MCF 10A (cell line): ENCODE measurements at regions of chr4 and their contacts with region 1.

Region 1: DNA sequence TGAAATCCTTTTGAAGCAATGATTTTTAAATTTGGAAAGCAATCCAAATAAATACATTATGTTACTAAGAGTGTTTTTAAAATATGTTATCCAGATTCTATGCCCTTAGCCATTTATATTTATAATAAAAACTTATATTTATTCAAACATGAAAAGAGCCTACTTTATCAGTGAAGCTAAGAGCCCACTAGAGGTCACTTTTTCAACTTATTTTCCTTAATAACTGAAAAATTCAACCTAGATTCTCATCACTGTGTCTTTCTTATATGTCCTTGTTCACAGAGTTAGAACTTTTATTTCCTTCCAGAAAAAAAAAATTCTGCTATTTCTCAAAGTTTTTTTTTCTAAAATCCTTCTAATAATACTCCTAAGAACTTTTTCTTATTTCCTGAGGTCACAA is 23.9 kb downstream of the PRDM8 start:
- DNase-seq: peak; percentile 34
- H3K4me3 Mint-ChIP-seq: no peak overlapping the region
- H3K27ac Mint-ChIP-seq: no peak overlapping the region
- H3K4me1 Mint-ChIP-seq: no peaks in the 10 kb centered on the region
- H3K27me3 Mint-ChIP-seq: no peaks in the 10 kb centered on the region
- CTCF ChIP-seq: peak; percentile 23

Region 2: DNA sequence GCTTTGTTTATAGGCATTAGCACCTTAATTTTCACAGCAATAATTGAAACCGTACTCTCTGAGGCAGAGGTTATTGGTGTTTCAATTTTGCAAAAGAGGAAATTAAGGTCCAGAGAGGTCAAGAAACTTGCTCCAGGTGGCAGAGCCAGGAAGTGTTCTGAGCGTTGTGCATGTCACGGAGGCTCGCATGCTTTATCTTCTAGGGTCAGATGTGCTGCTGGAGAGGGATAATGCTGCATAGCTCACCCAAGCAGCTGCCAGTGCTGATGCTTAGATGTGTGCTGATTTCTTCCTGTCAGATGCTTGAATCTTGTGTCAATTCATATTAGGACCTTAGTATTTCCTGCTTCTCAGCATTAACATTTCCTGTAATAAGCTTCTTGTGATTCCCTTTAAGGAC is 32.3 kb after region 1 on chr4:
- CTCF ChIA-PET with region 1: no interaction called
- POLR2A ChIA-PET with region 1: no interaction called
- intact Hi-C with region 1: no loop called
- DNase-seq: no peak
- H3K4me3 Mint-ChIP-seq: no peak overlapping the region
- H3K27ac Mint-ChIP-seq: no peak overlapping the region
- H3K4me1 Mint-ChIP-seq: no peaks in the 10 kb centered on the region
- H3K27me3 Mint-ChIP-seq: no peaks in the 10 kb centered on the region
- CTCF ChIP-seq: no peak

Region 3: DNA sequence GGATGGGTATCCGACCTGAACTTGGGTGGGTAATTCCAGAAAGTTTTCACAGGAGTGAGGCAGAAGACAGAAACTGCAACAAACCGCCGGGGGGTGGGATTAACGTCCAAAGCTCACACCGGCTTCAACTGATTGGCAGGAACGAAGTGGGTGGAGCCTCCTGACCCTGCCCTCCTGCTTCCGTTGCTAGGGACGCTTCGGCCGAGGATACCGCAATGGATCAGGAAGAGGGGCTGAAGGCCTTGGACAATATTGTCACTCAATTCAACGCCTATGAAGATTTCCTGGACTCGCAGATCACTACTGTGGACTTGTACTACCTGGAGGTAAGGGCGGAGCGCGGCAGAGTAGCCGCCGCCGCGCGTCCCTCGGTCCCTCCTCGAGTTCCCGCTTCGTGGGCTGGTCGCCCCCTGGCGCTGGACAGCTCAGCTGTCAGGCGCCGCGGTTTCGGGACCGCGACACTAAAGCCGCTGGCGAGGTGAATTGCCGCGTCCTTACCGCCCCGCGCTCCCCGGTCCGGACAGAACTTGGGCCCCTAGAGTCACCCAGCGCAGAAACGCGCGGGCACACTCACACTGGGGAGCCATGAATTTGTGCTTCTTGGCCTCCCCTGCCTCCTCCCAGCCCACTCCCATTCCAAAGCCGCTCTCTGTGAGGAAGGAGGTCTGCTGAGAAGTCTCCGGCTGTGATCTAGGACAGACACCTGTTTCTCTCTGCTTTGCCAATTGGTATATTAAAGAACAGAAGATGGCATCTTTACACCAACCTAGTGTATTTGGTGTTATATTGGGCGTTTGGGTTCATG is 114.6 kb after region 1 on chr4 and contains the start of gene CFAP299:
- CTCF ChIA-PET with region 1: interaction called, 8 read pairs
- POLR2A ChIA-PET with region 1: interaction called, 4 read pairs
- intact Hi-C with region 1: loop called (anchors 5 kb)
- DNase-seq: peak; percentile 94
- H3K4me3 Mint-ChIP-seq: peak within 1 kb of the TSS; percentile 80
- H3K27ac Mint-ChIP-seq: no peak within 1 kb of the TSS
- H3K4me1 Mint-ChIP-seq: no peaks in the 10 kb centered on the region
- H3K27me3 Mint-ChIP-seq: no peaks in the 10 kb centered on the region
- CTCF ChIP-seq: peak; percentile 45
- total RNA-seq, gene CFAP299: 0.33 TPM in 1 of 2 replicates, not detected in the other

Region 4: DNA sequence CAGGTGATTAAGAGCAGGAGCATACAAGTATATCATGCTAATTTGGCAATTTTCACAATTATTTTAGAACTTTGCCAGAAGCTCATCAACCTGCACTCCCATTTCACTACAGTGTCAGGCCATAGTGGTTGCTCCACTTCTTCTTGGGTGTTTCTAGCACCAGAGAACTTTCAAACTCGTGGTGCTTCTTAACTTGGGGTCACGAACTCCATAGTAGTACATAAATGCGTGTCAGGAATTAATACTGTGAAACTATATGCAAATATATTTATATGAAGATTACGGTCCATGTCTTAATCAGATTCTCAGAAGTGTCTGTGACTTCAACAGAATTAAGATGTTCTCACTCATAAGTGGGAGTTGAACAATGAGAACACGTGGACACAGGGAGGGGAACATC is 555.0 kb after region 1 on chr4:
- CTCF ChIA-PET with region 1: no interaction called
- POLR2A ChIA-PET with region 1: no interaction called
- intact Hi-C with region 1: no loop called
- DNase-seq: no peak
- H3K4me3 Mint-ChIP-seq: no peak overlapping the region
- H3K27ac Mint-ChIP-seq: no peak overlapping the region
- H3K4me1 Mint-ChIP-seq: no peaks in the 10 kb centered on the region
- H3K27me3 Mint-ChIP-seq: no peaks in the 10 kb centered on the region
- CTCF ChIP-seq: no peak

Region 5: GRCh38 chr4:81052119-81053068 is 831.2 kb after region 1 on chr4:
- CTCF ChIA-PET with region 1: interaction called, 4 read pairs
- POLR2A ChIA-PET with region 1: no interaction called
- intact Hi-C with region 1: loop called (anchors 5 kb)
- DNase-seq: peak; percentile 79
- H3K4me3 Mint-ChIP-seq: no peak overlapping the region
- H3K27ac Mint-ChIP-seq: no peak overlapping the region
- H3K4me1 Mint-ChIP-seq: no peaks in the 10 kb centered on the region
- H3K27me3 Mint-ChIP-seq: no peaks in the 10 kb centered on the region
- CTCF ChIP-seq: peak; percentile 59